ENCODE measurements at regions of chr17 and their contacts with region 1.

Region 1: GRCh38 chr17:43324205-43324893 is 74.4 kb upstream of the ARL4D start:
- DNase-seq: no peak
- H3K4me3 ChIP-seq: no peak overlapping the region
- H3K4me1 ChIP-seq: peaks cover 4% of the 10 kb centered on the region; the same call in 1 of the 2 replicates
- H3K27me3 ChIP-seq: no peaks in the 10 kb centered on the region

Region 2: DNA sequence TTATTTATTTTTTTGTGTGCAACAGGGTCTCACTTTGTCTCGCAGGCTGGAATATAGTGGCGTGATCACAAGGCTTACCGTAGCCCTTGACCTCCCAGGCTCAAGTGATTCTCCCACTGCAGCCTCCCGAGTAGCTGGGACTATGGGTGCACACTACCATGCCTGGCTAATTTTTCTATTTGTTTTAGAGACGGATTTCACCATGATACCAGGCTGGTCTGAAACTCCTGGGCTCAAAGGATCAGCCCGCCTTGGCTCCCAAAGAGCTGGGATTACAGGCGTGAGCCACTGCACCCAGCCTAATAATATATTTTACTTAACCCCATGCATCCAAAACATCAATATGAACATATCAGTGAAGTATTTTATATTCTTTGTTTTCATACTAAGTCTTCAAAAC is 98.0 kb before region 1 on chr17:
- in situ Hi-C with region 1: loop called (anchors 5 kb)
- DNase-seq: no peak
- H3K4me3 ChIP-seq: no peak overlapping the region
- H3K4me1 ChIP-seq: no peaks in the 10 kb centered on the region
- H3K27me3 ChIP-seq: no peaks in the 10 kb centered on the region

Measured in HAP-1 (cell line).